HepG2 (cell line): ENCODE measurements at regions of chr12 and their contacts with region 1.

Region 1: DNA sequence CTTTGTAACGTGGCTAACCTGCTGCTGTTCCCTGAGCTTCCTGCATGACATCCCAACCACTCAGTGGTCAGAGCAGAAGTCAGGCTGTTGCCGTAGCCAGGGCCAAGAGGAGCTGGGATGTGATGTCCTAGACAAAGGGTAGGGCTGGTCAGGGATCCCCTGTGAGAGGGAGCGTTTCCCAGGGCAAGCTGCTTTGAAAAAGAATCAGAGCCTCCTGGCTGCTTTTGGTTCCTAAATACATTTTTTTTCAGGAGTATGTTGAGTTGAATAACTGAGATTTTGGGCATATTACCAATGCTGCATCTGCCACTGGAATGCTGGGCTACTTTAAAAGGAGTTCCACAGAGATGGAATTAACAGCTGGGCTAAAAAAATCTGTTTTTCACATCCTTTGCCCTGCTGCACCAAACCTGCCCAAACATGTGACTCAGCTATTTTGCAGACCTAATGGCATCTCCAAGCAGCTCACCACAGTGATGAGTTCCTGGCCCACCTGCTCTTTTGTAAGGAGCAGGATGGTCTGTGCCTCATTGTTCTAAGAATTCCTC is 23.9 kb downstream of the ANKRD13A start:
- DNase-seq: no peak
- ATAC-seq: no peak
- H3K4me3 ChIP-seq: no peak overlapping the region
- H3K27ac ChIP-seq: no peak overlapping the region
- H3K4me1 ChIP-seq: peaks cover 15% of the 10 kb centered on the region; the same call in 1 of the 2 replicates
- H3K27me3 ChIP-seq: no peaks in the 10 kb centered on the region
- CTCF ChIP-seq: no peak
- EP300 ChIP-seq: no peak
- POLR2A ChIP-seq: no peak
- RAD21 ChIP-seq: no peak

Region 2: GRCh38 chr12:109927622-109928021 is 95.5 kb before region 1 on chr12:
- CTCF ChIA-PET with region 1: no interaction called
- POLR2A ChIA-PET with region 1: no interaction called
- in situ Hi-C with region 1: no loop called
- intact Hi-C with region 1: no loop called
- DNase-seq: peak; percentile 44
- ATAC-seq: peak; percentile 78
- H3K4me3 ChIP-seq: no peak overlapping the region
- H3K27ac ChIP-seq: no peak overlapping the region
- H3K4me1 ChIP-seq: peaks cover 25% of the 10 kb centered on the region
- H3K27me3 ChIP-seq: no peaks in the 10 kb centered on the region
- CTCF ChIP-seq: peak; percentile 78
- EP300 ChIP-seq: no peak
- POLR2A ChIP-seq: no peak
- RAD21 ChIP-seq: 0 out of 2 replicates have a peak, but pooled peaks have one; percentile 21

Region 3: DNA sequence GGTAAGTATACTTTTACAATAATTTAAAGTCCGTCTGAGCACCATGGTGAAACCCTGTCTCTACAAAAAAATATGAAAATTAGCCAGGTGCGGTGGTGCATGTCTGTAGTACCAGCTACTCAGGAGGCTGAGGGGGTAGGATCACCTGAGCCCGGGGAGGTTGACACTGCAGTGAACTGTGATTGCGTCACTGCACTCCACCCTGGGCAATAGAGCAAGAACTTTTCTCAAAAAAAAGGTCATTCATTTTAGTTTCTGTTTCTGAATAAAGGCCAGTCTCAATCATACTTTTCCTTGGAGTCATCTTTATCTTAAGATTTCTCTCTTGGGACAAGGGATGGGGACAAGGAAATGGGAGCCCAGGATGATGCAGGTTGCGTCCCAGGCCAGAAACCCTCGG is 11.0 kb before region 1 on chr12:
- CTCF ChIA-PET with region 1: no interaction called
- POLR2A ChIA-PET with region 1: interaction called, 10 read pairs
- in situ Hi-C with region 1: no loop called
- intact Hi-C with region 1: no loop called
- DNase-seq: peak; percentile 37
- ATAC-seq: peak; percentile 56; the same call in 2 of the 3 replicates
- H3K4me3 ChIP-seq: peak overlapping the region in 1 of 3 experiments; percentile 5; a peak in 1 of 6 replicates
- H3K27ac ChIP-seq: peak overlapping the region; percentile 90
- H3K4me1 ChIP-seq: peaks cover 42% of the 10 kb centered on the region
- H3K27me3 ChIP-seq: no peaks in the 10 kb centered on the region
- CTCF ChIP-seq: no peak
- EP300 ChIP-seq: 0 out of 4 replicates have a peak, but pooled peaks of 1 of the 2 experiments have one; percentile 12
- POLR2A ChIP-seq: no peak
- RAD21 ChIP-seq: no peak